ENCODE measurements at regions of chr1 and their contacts with region 1.

Region 1: DNA sequence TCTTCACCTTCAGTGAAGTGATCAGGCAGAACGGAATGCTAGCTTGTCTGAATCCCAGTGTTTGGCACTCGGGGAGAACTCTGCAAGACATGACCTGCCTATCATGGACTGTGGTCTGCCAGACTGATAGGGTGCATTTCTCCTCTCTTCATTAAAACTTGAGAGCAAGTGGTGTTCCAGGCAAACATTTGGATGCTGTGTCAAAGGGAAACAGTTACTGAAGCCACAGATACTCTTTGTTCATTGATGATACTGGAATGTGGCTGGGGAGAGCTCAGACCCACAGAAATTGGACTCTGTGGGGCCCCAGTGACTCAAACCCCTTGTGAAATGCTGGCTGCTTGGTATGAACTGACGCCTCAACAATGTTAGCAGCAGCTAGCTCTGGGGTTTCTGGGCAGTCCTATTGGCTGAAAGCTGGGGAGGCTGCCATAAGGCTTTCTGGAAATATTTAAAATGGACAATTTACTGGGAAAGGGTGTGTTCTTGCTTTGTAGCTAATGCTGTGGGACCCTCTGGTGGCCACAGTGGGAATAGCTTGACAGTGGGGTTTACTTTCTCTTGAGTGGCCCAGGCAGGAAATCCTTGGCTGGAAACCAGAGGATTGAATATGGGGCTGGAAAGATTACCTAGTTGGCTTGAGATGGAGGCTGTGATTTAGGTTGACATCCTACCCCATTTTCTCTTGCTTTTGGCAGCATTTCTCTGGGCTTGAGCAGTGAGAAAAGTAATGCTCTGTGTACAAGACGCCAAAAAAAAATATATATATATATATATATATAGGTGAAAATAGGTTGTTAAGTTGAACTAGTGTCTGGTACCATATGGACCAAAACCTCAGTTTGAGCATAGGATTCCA is 8.0 kb upstream of the S100A10 start:
- DNase-seq: peak; percentile 51
- ATAC-seq: peak; percentile 85
- H3K4me3 Mint-ChIP-seq: no peak overlapping the region
- H3K27ac Mint-ChIP-seq: no peak overlapping the region
- H3K4me1 Mint-ChIP-seq: no peaks in the 10 kb centered on the region
- H3K27me3 Mint-ChIP-seq: peaks cover 20% of the 10 kb centered on the region
- CTCF ChIP-seq: peak; percentile 95

Region 2: DNA sequence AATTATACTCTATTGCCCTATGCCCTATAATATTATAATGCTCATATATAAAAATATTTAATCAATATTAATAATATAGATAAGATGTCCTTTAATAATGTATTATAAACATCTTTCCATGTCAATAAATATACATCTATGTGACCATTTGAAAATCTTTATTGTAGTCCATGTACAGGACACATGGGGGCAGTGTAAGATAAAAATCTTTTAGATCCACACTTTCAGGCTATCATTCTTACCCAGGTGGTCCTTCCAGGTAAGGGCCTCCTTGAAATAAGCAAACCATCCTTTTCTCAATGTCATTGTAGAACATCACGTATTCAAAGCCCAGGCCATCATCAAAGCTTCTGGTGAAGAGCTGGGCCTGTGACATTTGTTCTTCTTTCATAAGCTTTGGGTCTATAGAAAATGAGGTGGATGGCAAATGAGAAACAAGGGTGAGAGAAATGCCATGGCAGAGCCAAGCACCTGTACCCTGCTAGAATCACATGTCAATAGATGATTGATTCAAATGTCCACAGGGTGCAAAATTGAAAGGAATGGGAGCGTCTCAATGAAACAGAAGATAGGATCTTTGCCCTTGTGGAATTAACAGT is 112.5 kb before region 1 on chr1:
- CTCF ChIA-PET with region 1: interaction called, 66 read pairs
- POLR2A ChIA-PET with region 1: no interaction called
- intact Hi-C with region 1: loop called (anchors 1 kb)
- DNase-seq: no peak
- ATAC-seq: peak; percentile 58
- H3K4me3 Mint-ChIP-seq: no peak overlapping the region
- H3K27ac Mint-ChIP-seq: no peak overlapping the region
- H3K4me1 Mint-ChIP-seq: peaks cover 9% of the 10 kb centered on the region
- H3K27me3 Mint-ChIP-seq: no peaks in the 10 kb centered on the region
- CTCF ChIP-seq: no peak

Region 3: GRCh38 chr1:151924679-151925587 is 76.7 kb before region 1 on chr1:
- CTCF ChIA-PET with region 1: interaction called, 21 read pairs
- POLR2A ChIA-PET with region 1: interaction called, 4 read pairs
- intact Hi-C with region 1: no loop called
- DNase-seq: no peak
- ATAC-seq: no peak
- H3K4me3 Mint-ChIP-seq: no peak overlapping the region
- H3K27ac Mint-ChIP-seq: peak overlapping the region; percentile 8
- H3K4me1 Mint-ChIP-seq: peaks cover 36% of the 10 kb centered on the region
- H3K27me3 Mint-ChIP-seq: no peaks in the 10 kb centered on the region
- CTCF ChIP-seq: no peak

Region 4: GRCh38 chr1:151968058-151968457 is 33.6 kb before region 1 on chr1:
- CTCF ChIA-PET with region 1: interaction called, 204 read pairs
- POLR2A ChIA-PET with region 1: interaction called, 6 read pairs
- intact Hi-C with region 1: loop called (anchors 1 kb)
- DNase-seq: no peak
- ATAC-seq: peak; percentile 86
- H3K4me3 Mint-ChIP-seq: no peak overlapping the region
- H3K27ac Mint-ChIP-seq: no peak overlapping the region
- H3K4me1 Mint-ChIP-seq: peaks cover 7% of the 10 kb centered on the region
- H3K27me3 Mint-ChIP-seq: peaks cover 10% of the 10 kb centered on the region
- CTCF ChIP-seq: no peak

Region 5: DNA sequence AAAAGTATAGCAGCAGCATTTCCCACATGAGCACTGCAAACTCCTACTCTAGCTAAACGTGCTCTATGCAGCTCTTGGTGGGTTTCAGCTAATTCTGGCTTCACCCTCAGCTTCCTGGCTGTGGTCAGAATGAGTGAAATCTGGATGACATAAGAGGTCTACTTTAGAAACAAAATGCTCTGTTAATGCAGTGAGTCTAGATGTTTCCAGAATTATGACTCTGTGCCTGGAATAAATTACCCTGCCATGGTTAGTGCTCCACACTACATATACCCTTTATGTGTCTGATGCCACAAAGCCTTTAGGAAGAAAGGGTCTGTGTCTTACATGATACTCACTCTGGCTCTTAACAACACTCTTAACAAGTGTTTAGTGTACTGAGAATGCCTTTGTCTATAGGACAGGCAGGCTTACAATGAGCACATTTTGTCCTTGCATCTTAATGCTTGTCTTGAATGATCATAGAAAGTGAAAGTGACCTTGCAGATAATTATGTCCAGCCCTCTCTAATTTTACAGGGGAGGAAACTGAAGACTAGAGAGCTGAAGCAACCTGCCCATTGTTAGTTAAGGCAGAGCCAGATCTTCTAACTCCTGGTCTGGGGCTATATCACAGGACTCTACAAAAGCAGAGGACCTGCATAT is 17.2 kb before region 1 on chr1:
- CTCF ChIA-PET with region 1: interaction called, 33 read pairs
- POLR2A ChIA-PET with region 1: interaction called, 5 read pairs
- intact Hi-C with region 1: no loop called
- DNase-seq: no peak
- ATAC-seq: peak; percentile 18
- H3K4me3 Mint-ChIP-seq: no peak overlapping the region
- H3K27ac Mint-ChIP-seq: no peak overlapping the region
- H3K4me1 Mint-ChIP-seq: peaks cover 23% of the 10 kb centered on the region
- H3K27me3 Mint-ChIP-seq: peaks cover 3% of the 10 kb centered on the region
- CTCF ChIP-seq: no peak